Heart right ventricle (tissue), 16 donors: ENCODE measurements at regions of chr10 and their contacts with region 1.

Region 1: GRCh38 chr10:21292763-21293517 is 232.5 kb downstream of the SKIDA1 start:
- DNase-seq: peak; percentile 58 to 86
- ATAC-seq: peak; percentile 74 to 96 (median 92)
- H3K4me3 ChIP-seq: peak overlapping the region in 7 of 10 donors; percentile 9 to 47 (median 37)
- H3K27ac ChIP-seq: peak overlapping the region in 9 of 10 donors; percentile 17 to 62 (median 46)
- H3K4me1 ChIP-seq: peaks cover 0 to 26% (median 17%) of the 10 kb centered on the region in 9 donors
- H3K27me3 ChIP-seq: no peaks in the 10 kb centered on the region
- CTCF ChIP-seq: no peak

Region 2: GRCh38 chr10:20737110-20737509 is 555.8 kb before region 1 on chr10:
- intact Hi-C with region 1: no loop called
- DNase-seq: no peak
- ATAC-seq: no peak
- H3K4me3 ChIP-seq: no peak overlapping the region
- H3K27ac ChIP-seq: no peak overlapping the region
- H3K4me1 ChIP-seq: no peaks in the 10 kb centered on the region
- H3K27me3 ChIP-seq: no peaks in the 10 kb centered on the region
- CTCF ChIP-seq: no peak

Region 3: GRCh38 chr10:21315645-21316281 is 22.8 kb after region 1 on chr10:
- intact Hi-C with region 1: no loop called
- DNase-seq: peak; percentile 69 to 89
- ATAC-seq: peak; percentile 91 to 97 (median 96)
- H3K4me3 ChIP-seq: no peak overlapping the region
- H3K27ac ChIP-seq: peak overlapping the region in 9 of 10 donors; percentile 17 to 79 (median 69)
- H3K4me1 ChIP-seq: peaks cover 21 to 40% (median 32%) of the 10 kb centered on the region in 9 donors
- H3K27me3 ChIP-seq: no peaks in the 10 kb centered on the region
- CTCF ChIP-seq: no peak

Region 4: DNA sequence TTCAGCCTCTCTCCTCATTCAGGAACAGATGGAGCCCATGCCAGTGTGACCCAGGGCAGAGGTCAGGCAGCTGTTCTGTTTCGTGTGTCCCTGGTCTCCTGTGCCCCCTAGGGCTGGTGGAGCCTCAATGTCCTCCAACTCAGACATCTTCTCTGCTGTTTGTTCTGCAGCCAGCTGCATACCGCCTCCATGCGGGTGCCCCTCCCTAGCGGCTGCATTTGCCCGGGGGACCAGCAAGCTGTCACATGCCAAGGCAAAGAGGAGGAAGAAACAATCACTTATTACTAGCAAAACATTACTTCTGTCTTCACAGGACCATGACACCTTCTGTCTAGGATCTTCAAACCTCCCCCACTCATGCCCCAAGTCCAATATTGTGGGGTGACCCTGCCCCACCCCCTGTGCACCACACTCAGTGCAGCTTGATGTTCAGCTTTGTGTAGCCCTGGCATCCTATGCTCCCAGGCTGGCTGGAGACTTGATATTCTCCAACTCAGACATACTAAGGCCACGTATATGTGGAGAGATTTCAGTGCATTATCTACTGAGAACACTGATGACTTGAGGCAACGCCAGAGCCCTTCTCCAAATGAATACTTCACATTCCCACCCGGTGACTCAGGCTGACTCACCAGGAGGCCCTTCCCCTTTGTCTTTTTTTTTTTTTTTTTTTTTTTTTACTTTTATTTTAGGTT is 43.7 kb after region 1 on chr10:
- intact Hi-C with region 1: loop called in 1 of 10 experiments (anchors 5 kb)
- DNase-seq: peak in 1 of 2 donors; percentile 65
- ATAC-seq: peak; percentile 41 to 92 (median 82)
- H3K4me3 ChIP-seq: no peak overlapping the region
- H3K27ac ChIP-seq: peak overlapping the region in 9 of 10 donors; percentile 4 to 72 (median 47)
- H3K4me1 ChIP-seq: peaks cover 7 to 28% (median 19%) of the 10 kb centered on the region in 9 donors
- H3K27me3 ChIP-seq: no peaks in the 10 kb centered on the region
- CTCF ChIP-seq: peak in 1 of 9 donors; percentile 32